ENCODE measurements at regions of chr17 and their contacts with region 1.

Region 1: DNA sequence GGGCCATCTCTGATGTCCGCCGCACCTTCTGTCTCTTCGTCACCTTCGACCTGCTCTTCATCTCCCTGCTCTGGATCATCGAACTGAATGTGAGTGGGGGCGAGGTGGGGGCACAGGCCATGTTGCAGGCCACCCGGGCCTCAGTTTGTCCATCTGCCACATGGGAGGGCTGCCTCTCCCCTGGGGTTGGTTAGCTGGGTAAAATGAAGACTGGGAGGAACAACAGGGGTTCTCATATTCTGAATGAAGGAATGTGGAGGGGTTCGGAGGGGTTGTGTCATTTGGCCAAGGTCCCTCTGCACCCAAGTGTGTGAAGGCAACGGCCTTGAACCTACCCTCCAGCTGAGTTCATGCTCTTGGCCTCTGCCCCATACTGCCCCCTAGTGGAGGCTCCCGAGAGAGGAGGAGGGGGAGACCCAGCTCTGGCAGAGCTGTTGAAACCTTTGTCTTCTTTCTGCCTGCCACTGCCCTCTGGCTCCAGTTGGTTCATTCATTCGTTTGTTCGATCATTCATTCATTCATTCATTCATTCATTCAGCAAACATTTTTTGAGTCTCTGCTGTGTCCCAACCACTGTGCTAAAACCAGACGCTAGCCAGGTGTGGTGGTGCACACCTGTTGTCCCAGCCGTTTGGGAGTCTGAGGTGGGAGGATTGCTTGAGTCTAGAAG is 11.4 kb upstream of the TCAP start:
- DNase-seq: peak; percentile 92
- H3K4me3 Mint-ChIP-seq: no peak overlapping the region
- H3K27ac Mint-ChIP-seq: no peak overlapping the region
- H3K4me1 Mint-ChIP-seq: peaks cover 47% of the 10 kb centered on the region
- H3K27me3 Mint-ChIP-seq: no peaks in the 10 kb centered on the region

Region 2: GRCh38 chr17:39605492-39606433 is 48.0 kb before region 1 on chr17:
- CTCF ChIA-PET with region 1: no interaction called
- intact Hi-C with region 1: no loop called
- DNase-seq: no peak
- H3K4me3 Mint-ChIP-seq: no peak overlapping the region
- H3K27ac Mint-ChIP-seq: no peak overlapping the region
- H3K4me1 Mint-ChIP-seq: peaks cover 19% of the 10 kb centered on the region
- H3K27me3 Mint-ChIP-seq: peaks cover 65% of the 10 kb centered on the region

Region 3: DNA sequence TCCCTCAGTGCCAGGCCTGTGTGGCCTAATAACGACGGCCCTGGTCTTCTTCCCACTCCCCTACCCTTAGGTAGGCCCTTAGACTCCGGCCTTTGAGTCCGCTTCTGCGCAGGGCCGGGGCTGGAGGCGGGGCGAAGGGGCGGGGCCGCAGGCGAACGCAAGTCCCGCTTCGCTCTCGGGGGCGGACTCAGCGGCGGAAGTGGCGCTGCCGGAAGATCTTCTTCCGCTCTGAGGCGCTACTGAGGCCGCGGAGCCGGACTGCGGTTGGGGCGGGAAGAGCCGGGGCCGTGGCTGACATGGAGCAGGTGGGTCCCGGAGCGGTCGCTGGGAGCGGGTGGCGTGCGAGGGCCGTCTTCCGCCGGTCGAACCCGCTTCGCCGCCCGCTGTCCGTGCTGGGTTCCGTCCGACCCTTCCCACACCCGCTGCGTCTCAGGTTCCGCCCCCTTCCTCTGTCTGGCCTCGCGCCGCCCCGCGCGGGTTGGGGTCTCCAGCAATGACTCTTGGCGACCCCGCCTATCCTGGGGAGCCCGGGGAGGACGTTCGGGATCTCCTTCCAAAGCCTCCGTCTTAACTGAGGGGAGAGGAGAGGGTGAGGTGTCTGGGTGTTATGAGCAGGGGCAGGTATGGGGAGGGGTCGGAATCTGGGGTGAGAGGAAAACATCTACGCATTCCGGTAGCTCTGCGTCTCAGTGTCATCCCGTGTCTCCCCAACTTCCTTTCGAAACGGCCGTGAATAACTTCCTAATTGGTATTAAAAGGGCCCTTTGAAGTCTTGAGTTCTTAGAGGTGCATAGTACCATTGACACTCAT is 16.7 kb before region 1 on chr17 and contains the start of gene STARD3:
- CTCF ChIA-PET with region 1: interaction called, 44 read pairs
- intact Hi-C with region 1: no loop called
- DNase-seq: peak; percentile 94
- H3K4me3 Mint-ChIP-seq: peak within 1 kb of the TSS; percentile 92
- H3K27ac Mint-ChIP-seq: peak within 1 kb of the TSS; percentile 93
- H3K4me1 Mint-ChIP-seq: peaks cover 49% of the 10 kb centered on the region
- H3K27me3 Mint-ChIP-seq: no peaks in the 10 kb centered on the region
- total RNA-seq, gene STARD3: 56.1 to 56.8 TPM

Region 4: GRCh38 chr17:39643271-39643670 is 10.5 kb before region 1 on chr17:
- CTCF ChIA-PET with region 1: interaction called, 44 read pairs
- intact Hi-C with region 1: no loop called
- DNase-seq: no peak
- H3K4me3 Mint-ChIP-seq: no peak overlapping the region
- H3K27ac Mint-ChIP-seq: no peak overlapping the region
- H3K4me1 Mint-ChIP-seq: peaks cover 61% of the 10 kb centered on the region
- H3K27me3 Mint-ChIP-seq: no peaks in the 10 kb centered on the region

Region 5: DNA sequence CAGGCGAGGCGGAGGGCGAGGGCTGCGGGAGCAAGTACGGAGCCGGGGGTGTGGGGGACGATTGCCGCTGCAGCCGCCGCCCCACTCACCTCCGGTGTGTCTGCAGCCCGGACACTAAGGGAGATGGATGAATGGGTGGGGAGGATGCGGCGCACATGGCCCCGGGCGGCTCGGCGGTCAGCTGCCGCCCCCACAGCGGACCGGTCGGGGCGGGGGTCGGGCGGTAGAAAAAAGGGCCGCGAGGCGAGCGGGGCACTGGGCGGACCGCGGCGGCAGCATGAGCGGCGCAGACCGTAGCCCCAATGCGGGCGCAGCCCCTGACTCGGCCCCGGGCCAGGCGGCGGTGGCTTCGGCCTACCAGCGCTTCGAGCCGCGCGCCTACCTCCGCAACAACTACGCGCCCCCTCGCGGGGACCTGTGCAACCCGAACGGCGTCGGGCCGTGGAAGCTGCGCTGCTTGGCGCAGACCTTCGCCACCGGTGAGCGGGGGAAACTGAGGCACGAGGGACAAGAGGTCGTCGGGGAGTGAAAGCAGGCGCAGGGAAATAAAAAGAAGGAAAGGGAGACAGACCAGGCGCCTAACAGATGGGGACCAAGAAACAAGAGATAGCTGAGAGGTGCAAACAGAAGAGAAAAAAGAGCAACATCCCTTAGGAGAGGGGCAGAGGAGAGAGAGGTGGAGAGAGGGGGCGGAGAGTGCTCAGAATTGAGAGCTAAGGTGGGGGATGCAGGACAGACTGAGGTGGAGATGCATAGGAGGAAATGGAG is 14.6 kb after region 1 on chr17 and contains the start of gene PNMT:
- CTCF ChIA-PET with region 1: interaction called, 17 read pairs
- intact Hi-C with region 1: no loop called
- DNase-seq: peak; percentile 77
- H3K4me3 Mint-ChIP-seq: peak within 1 kb of the TSS; percentile 52
- H3K27ac Mint-ChIP-seq: no peak within 1 kb of the TSS
- H3K4me1 Mint-ChIP-seq: peaks cover 14% of the 10 kb centered on the region
- H3K27me3 Mint-ChIP-seq: peaks cover 16% of the 10 kb centered on the region
- total RNA-seq, gene PNMT: not detected

Region 6: GRCh38 chr17:39730095-39730921 is 76.5 kb after region 1 on chr17 and contains the start of gene MIEN1:
- CTCF ChIA-PET with region 1: interaction called, 15 read pairs
- intact Hi-C with region 1: no loop called
- DNase-seq: peak; percentile 95
- H3K4me3 Mint-ChIP-seq: peak within 1 kb of the TSS; percentile 87
- H3K27ac Mint-ChIP-seq: peak within 1 kb of the TSS; percentile 84
- H3K4me1 Mint-ChIP-seq: peaks cover 14% of the 10 kb centered on the region
- H3K27me3 Mint-ChIP-seq: no peaks in the 10 kb centered on the region
- total RNA-seq, gene MIEN1: 35.2 to 36.5 TPM

Measured in activated naive CD4-positive, alpha-beta T cell treated with anti-CD3 and anti-CD28 coated beads for 36 hours (primary cell).